Dorsolateral prefrontal cortex (tissue), 120 donors: ENCODE measurements at regions of chr7 and their contacts with region 1.

Region 1: DNA sequence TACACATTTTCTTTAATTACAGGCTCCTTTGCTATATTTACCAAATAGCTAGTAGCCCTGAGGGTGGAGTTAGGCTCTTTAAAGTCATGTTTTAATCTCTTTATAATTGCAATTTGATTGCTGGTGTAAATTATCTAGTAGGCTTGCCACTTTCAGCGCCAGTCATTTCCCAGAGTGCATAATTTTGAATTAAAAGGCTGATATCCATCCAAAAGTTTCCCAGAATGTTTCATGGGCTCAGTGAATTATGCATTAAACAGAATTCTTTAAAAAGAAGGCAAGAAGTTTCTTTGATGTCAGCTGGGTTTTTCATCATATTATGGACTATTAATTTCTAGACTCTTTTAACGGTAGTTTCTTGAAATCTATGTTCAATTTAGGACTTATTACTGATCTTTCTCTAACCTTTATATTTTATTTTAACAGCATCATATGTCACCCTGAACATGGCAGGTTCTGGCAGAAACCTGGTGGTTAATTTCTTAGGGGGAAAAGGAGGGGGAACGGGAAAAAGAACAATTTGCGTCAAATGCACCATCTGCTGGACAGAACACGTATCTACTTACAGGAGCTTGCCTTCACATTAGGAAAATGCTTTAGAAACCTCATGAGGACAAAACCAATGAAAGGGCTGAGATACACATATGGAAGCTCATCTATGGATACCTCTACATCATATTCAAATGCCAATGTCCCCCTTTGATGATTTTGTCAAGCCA is 171.1 kb downstream of the GRM3 start:
- DNase-seq: peak in 2 of 10 donors; percentile 7 to 46
- H3K4me3 ChIP-seq: no peak overlapping the region
- H3K27ac ChIP-seq: peak overlapping the region in 45 of 59 donors; percentile 1 to 74 (median 46)
- H3K27me3 ChIP-seq: no peaks in the 10 kb centered on the region
- CTCF ChIP-seq: peak; percentile 51 to 87 (median 70)

Region 2: GRCh38 chr7:86600506-86601290 is 214.1 kb before region 1 on chr7:
- intact Hi-C with region 1: loop called (anchors 2 to 5 kb)
- DNase-seq: peak; percentile 13 to 88 (median 82)
- H3K4me3 ChIP-seq: no peak overlapping the region
- H3K27ac ChIP-seq: peak overlapping the region in 27 of 59 donors; percentile 1 to 69 (median 40)
- H3K27me3 ChIP-seq: no peaks in the 10 kb centered on the region
- CTCF ChIP-seq: peak in 54 of 56 donors; percentile 31 to 81 (median 58)

Region 3: GRCh38 chr7:86643561-86644281 is 171.1 kb before region 1 on chr7 and contains the start of gene GRM3:
- intact Hi-C with region 1: loop called (anchors 5 to 10 kb)
- DNase-seq: peak; percentile 42 to 92 (median 90)
- H3K4me3 ChIP-seq: peak within 1 kb of the TSS; percentile 58 to 90 (median 75)
- H3K27ac ChIP-seq: peak within 1 kb of the TSS; percentile 76 to 99 (median 96)
- H3K27me3 ChIP-seq: no peaks in the 10 kb centered on the region
- CTCF ChIP-seq: peak in 4 of 56 donors; percentile 3 to 13 (median 7)
- total RNA-seq, gene GRM3: 39.3 to 160 (median 71.7) TPM

Region 4: DNA sequence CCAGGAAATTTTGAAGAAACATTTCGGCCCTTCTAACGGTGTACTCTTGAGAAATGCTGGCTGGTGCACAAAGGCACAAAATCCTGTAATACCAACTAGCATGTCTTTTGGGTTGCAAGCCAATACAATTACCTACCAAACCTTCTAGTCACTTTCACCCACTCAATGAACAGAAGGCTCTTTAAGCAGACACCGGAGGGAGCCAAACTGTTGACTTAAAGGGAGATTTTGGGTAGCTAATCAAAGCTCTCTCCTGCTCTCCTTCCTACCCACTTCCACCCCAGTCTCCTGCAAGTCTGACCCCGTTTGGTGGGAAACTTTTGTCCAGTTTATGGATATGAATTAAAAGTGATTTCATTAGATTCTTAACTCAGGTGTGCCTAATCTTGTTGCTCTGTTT is 147.1 kb before region 1 on chr7:
- intact Hi-C with region 1: loop called in 1 of 2 experiments (anchors 5 kb)
- DNase-seq: no peak
- H3K4me3 ChIP-seq: no peak overlapping the region
- H3K27ac ChIP-seq: peak overlapping the region; percentile 60 to 99 (median 97)
- H3K27me3 ChIP-seq: no peaks in the 10 kb centered on the region
- CTCF ChIP-seq: peak in 13 of 56 donors; percentile 9 to 41 (median 25)

Region 5: DNA sequence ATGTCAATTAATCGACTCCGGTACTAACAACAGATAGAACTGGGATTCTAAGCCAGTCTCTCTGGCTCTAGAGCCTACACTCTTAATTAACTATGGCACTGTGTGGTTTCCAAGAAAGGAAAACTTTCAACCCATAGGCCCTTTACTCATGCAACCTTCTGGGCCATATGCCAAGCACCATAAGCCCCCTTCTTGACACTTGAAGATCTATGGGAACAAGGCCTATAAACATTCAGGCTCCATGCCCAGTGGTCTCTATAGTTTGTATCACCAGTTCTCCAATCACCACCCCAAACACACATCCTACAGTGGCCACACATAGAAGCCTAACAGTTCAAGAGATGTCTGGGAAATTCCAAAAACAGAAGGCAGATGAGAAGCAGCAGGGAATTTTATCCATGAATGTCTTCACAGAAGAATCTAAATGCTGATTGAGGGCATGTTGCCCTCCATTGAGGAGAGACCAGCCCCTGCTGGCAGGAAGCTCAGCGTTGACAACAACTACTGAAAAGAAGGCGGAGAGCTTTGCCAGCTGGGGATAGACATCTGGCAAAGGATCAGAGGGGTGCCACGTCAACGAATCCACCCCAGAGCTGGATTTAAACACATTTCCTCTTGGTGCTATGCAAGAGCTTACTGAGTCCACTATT is 106.7 kb before region 1 on chr7:
- intact Hi-C with region 1: loop called in 1 of 2 experiments (anchors 10 kb)
- DNase-seq: peak; percentile 4 to 74 (median 70)
- H3K4me3 ChIP-seq: no peak overlapping the region
- H3K27ac ChIP-seq: peak overlapping the region in 58 of 59 donors; percentile 54 to 93 (median 84)
- H3K27me3 ChIP-seq: no peaks in the 10 kb centered on the region
- CTCF ChIP-seq: peak in 24 of 56 donors; percentile 8 to 45 (median 25)

Region 6: DNA sequence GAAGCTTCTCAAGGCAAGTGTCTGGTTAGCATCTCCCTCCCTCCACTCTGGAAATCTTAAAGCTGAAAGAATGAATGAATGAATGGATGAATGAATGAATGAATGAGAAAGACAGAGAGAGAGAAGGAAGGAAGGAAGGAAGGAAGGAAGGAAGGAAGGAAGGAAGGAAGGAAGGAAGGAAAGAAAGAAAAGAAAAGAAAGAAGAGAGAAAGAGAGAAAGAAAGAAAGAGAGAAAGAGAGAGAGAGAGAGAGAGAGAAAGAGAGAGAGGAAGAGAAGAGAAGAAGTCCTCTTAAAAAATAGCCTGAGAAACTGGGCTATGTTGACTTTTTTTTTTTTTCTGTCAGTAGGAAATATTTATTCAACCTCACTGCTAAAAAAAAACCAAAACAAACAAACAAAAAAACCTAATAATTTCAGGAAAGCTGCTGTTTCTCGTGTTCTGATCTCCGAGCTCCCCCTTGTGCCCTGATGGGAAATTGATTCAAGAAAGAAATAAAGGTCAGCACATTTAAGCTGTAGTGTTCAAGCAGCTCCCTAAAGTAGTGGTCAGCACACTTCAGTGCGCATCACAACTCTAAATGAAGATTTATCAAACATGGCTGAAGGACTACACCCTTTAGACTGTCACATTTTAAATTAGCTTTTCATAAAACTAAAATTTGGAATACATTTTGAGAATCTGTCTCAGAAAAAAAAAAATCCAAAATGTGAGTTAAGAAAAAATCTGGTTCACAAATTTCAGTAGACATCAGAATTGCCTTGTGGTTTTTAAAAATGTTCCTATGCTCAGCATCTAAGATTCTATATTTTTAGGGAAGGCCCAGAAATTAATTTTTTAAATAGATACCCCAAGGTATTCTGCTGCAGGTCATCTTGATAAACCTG is 90.4 kb after region 1 on chr7:
- intact Hi-C with region 1: loop called in 1 of 2 experiments (anchors 10 kb)
- DNase-seq: peak in 1 of 10 donors; percentile 12
- H3K4me3 ChIP-seq: no peak overlapping the region
- H3K27ac ChIP-seq: no peak overlapping the region
- H3K27me3 ChIP-seq: no peaks in the 10 kb centered on the region
- CTCF ChIP-seq: peak in 55 of 56 donors; percentile 46 to 84 (median 70)

Region 7: GRCh38 chr7:86968618-86969017 is 153.8 kb after region 1 on chr7:
- intact Hi-C with region 1: no loop called
- DNase-seq: peak in 1 of 10 donors; percentile 44
- H3K4me3 ChIP-seq: no peak overlapping the region
- H3K27ac ChIP-seq: peak overlapping the region in 1 of 59 donors; percentile 8
- H3K27me3 ChIP-seq: no peaks in the 10 kb centered on the region
- CTCF ChIP-seq: no peak